A673 (cell line): ENCODE measurements at regions of chr1 and their contacts with region 1.

Region 1: GRCh38 chr1:36385410-36386257 is at the start of gene STK40:
- DNase-seq: peak; percentile 100
- H3K4me3 ChIP-seq: peak within 1 kb of the TSS; percentile 88
- H3K27ac ChIP-seq: peak within 1 kb of the TSS; percentile 100
- H3K4me1 ChIP-seq: peaks cover 37% of the 10 kb centered on the region
- H3K27me3 ChIP-seq: no peaks in the 10 kb centered on the region
- CTCF ChIP-seq: no peak
- total RNA-seq, gene STK40: 93.2 and 109 TPM in 2 replicates

Region 2: GRCh38 chr1:36397378-36398230 is 12.0 kb after region 1 on chr1 and contains the start of gene LSM10:
- CTCF ChIA-PET with region 1: no interaction called
- POLR2A ChIA-PET with region 1: interaction called, 16 read pairs
- intact Hi-C with region 1: no loop called
- DNase-seq: peak; percentile 97
- H3K4me3 ChIP-seq: peak within 1 kb of the TSS; percentile 85
- H3K27ac ChIP-seq: peak within 1 kb of the TSS; percentile 86
- H3K4me1 ChIP-seq: peaks cover 8% of the 10 kb centered on the region
- H3K27me3 ChIP-seq: no peaks in the 10 kb centered on the region
- CTCF ChIP-seq: no peak
- total RNA-seq, gene LSM10: 60.7 and 68.0 TPM in 2 replicates